CD14-positive monocyte (primary cell): ENCODE measurements at regions of chr20 and their contacts with region 1.

Region 1: GRCh38 chr20:32195581-32195980 is 12.0 kb downstream of the PLAGL2 start:
- DNase-seq: no peak
- H3K4me3 ChIP-seq: no peak overlapping the region
- H3K4me3 Mint-ChIP-seq: no peak overlapping the region
- H3K27ac ChIP-seq: no peak overlapping the region
- H3K27ac Mint-ChIP-seq: peak overlapping the region in 2 of 7 donors; percentile 41 to 55
- H3K4me1 ChIP-seq: peaks cover 16 to 18% of the 10 kb centered on the region in 2 donors
- H3K4me1 Mint-ChIP-seq: peaks cover 33% of the 10 kb centered on the region
- H3K27me3 ChIP-seq: no peaks in the 10 kb centered on the region
- H3K27me3 Mint-ChIP-seq: peaks cover 0 to 2% (median 0%) of the 10 kb centered on the region in 3 donors
- CTCF ChIP-seq: no peak

Region 2: GRCh38 chr20:32149596-32150170 is 45.9 kb before region 1 on chr20:
- intact Hi-C with region 1: loop called in 1 of 2 experiments (anchors 5 kb)
- DNase-seq: no peak
- H3K4me3 ChIP-seq: no peak overlapping the region
- H3K4me3 Mint-ChIP-seq: no peak overlapping the region
- H3K27ac ChIP-seq: peak overlapping the region in 1 of 2 donors; percentile 27
- H3K27ac Mint-ChIP-seq: peak overlapping the region in 3 of 7 donors; percentile 3 to 54 (median 50)
- H3K4me1 ChIP-seq: peaks cover 6 to 25% of the 10 kb centered on the region in 2 donors
- H3K4me1 Mint-ChIP-seq: peaks cover 24% of the 10 kb centered on the region
- H3K27me3 ChIP-seq: no peaks in the 10 kb centered on the region
- H3K27me3 Mint-ChIP-seq: peaks cover 0 to 4% (median 0%) of the 10 kb centered on the region in 3 donors
- CTCF ChIP-seq: no peak

Region 3: GRCh38 chr20:32159766-32160221 is 35.8 kb before region 1 on chr20:
- intact Hi-C with region 1: no loop called
- DNase-seq: no peak
- H3K4me3 ChIP-seq: no peak overlapping the region
- H3K4me3 Mint-ChIP-seq: no peak overlapping the region
- H3K27ac ChIP-seq: peak overlapping the region in 1 of 2 donors; percentile 42
- H3K27ac Mint-ChIP-seq: peak overlapping the region in 5 of 7 donors; percentile 8 to 76 (median 63)
- H3K4me1 ChIP-seq: peaks cover 13 to 23% of the 10 kb centered on the region in 2 donors
- H3K4me1 Mint-ChIP-seq: peaks cover 30% of the 10 kb centered on the region
- H3K27me3 ChIP-seq: no peaks in the 10 kb centered on the region
- H3K27me3 Mint-ChIP-seq: peaks cover 0 to 2% (median 0%) of the 10 kb centered on the region in 3 donors
- CTCF ChIP-seq: no peak

Region 4: GRCh38 chr20:32207626-32208498 is 12.3 kb after region 1 on chr20 and contains the starts of genes PLAGL2 and POFUT1:
- intact Hi-C with region 1: no loop called
- DNase-seq: peak; percentile 76 to 85 (median 79)
- H3K4me3 ChIP-seq: peak within 1 kb of the TSS; percentile 90 to 96 (median 93)
- H3K4me3 Mint-ChIP-seq: peak within 1 kb of the TSS; percentile 97 to 98
- H3K27ac ChIP-seq: peak within 1 kb of the TSS; percentile 79 to 88
- H3K27ac Mint-ChIP-seq: peak within 1 kb of the TSS; percentile 96 to 99 (median 97)
- H3K4me1 ChIP-seq: peaks cover 49 to 59% of the 10 kb centered on the region in 2 donors
- H3K4me1 Mint-ChIP-seq: peaks cover 67% of the 10 kb centered on the region
- H3K27me3 ChIP-seq: no peaks in the 10 kb centered on the region
- H3K27me3 Mint-ChIP-seq: peaks cover 0 to 4% (median 1%) of the 10 kb centered on the region in 3 donors
- CTCF ChIP-seq: peak; percentile 22
- polyA plus RNA-seq, gene PLAGL2: 6.2 to 31.7 (median 14.7) TPM
- polyA plus RNA-seq, gene POFUT1: 10.9 to 22.8 (median 11.8) TPM

Region 5: DNA sequence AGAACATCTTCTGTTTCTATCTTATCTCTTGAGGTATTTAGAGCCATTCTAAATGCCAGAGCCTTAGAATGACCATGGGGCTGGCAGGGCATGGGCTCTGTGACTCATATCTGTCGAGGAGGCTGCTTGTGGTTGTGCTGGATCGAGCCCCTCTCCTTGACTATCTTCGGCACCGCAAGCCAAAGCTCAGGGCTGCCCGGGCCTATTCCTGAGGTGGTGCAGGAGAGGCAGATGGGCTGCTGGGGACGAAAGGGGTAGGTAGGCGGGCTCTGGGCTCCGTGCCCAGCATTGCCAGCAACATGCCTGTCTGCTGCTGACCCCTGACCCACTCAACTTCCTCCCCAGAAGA is 299.6 kb after region 1 on chr20:
- intact Hi-C with region 1: no loop called
- DNase-seq: no peak
- H3K4me3 ChIP-seq: no peak overlapping the region
- H3K4me3 Mint-ChIP-seq: no peak overlapping the region
- H3K27ac ChIP-seq: no peak overlapping the region
- H3K27ac Mint-ChIP-seq: no peak overlapping the region
- H3K4me1 ChIP-seq: peaks cover 18 to 23% of the 10 kb centered on the region in 2 donors
- H3K4me1 Mint-ChIP-seq: peaks cover 36% of the 10 kb centered on the region
- H3K27me3 ChIP-seq: no peaks in the 10 kb centered on the region
- H3K27me3 Mint-ChIP-seq: no peaks in the 10 kb centered on the region
- CTCF ChIP-seq: no peak